Right cardiac atrium (tissue), 5 donors: ENCODE measurements at regions of chr2 and their contacts with region 1.

Region 1: GRCh38 chr2:28594289-28595108 is 98.6 kb downstream of the PLB1 start:
- DNase-seq: peak; percentile 87 to 97 (median 92)
- ATAC-seq: peak; percentile 81 to 93
- H3K4me3 ChIP-seq: no peak overlapping the region
- H3K27ac ChIP-seq: peak overlapping the region; percentile 86
- H3K4me1 ChIP-seq: peaks cover 3% of the 10 kb centered on the region
- H3K27me3 ChIP-seq: no peaks in the 10 kb centered on the region

Region 2: GRCh38 chr2:28661589-28662001 is 67.1 kb after region 1 on chr2:
- intact Hi-C with region 1: loop called in 1 of 4 experiments (anchors 10 kb)
- DNase-seq: peak; percentile 72 to 87 (median 83)
- ATAC-seq: peak; percentile 77 to 89
- H3K4me3 ChIP-seq: no peak overlapping the region
- H3K27ac ChIP-seq: peak overlapping the region; percentile 85
- H3K4me1 ChIP-seq: peaks cover 10% of the 10 kb centered on the region
- H3K27me3 ChIP-seq: no peaks in the 10 kb centered on the region

Region 3: DNA sequence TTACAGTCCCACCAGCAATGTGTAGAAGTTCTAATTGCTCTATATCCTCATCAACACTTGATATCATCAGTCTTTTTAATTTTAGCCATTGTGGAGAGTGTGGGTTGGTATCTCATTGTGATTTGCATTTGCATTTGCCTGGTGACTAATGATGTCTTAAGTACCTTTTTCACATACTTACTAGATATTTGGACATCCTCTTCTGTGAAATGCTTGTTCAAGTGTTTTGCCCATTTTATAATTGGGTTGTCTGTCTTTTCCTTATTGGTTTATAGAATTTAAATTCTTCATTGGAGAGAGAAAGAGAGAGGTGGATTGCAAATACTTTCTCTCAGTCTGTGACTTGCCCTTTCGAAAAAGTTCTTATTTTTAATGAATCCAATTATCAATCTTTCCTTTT is 143.2 kb after region 1 on chr2:
- intact Hi-C with region 1: no loop called
- DNase-seq: no peak
- ATAC-seq: no peak
- H3K4me3 ChIP-seq: no peak overlapping the region
- H3K27ac ChIP-seq: no peak overlapping the region
- H3K4me1 ChIP-seq: peaks cover 2% of the 10 kb centered on the region
- H3K27me3 ChIP-seq: no peaks in the 10 kb centered on the region